Activated naive CD4-positive, alpha-beta T cell treated with anti-CD3 and anti-CD28 coated beads for 36 hours (primary cell): ENCODE measurements at regions of chr19 and their contacts with region 1.

Region 1: GRCh38 chr19:54448774-54449700 is at the start of gene LENG8:
- DNase-seq: peak; percentile 98
- H3K4me3 Mint-ChIP-seq: peak within 1 kb of the TSS; percentile 100
- H3K27ac Mint-ChIP-seq: peak within 1 kb of the TSS; percentile 99
- H3K4me1 Mint-ChIP-seq: peaks cover 45% of the 10 kb centered on the region
- H3K27me3 Mint-ChIP-seq: no peaks in the 10 kb centered on the region
- total RNA-seq, gene LENG8: 171 to 175 TPM

Region 2: GRCh38 chr19:54115109-54116063 is 333.7 kb before region 1 on chr19 and contains the starts of genes PRPF31 and TFPT:
- CTCF ChIA-PET with region 1: no interaction called
- intact Hi-C with region 1: loop called (anchors 2 kb)
- DNase-seq: peak; percentile 99
- H3K4me3 Mint-ChIP-seq: peak within 1 kb of the TSS; percentile 90
- H3K27ac Mint-ChIP-seq: peak within 1 kb of the TSS; percentile 97
- H3K4me1 Mint-ChIP-seq: peaks cover 30% of the 10 kb centered on the region
- H3K27me3 Mint-ChIP-seq: no peaks in the 10 kb centered on the region
- total RNA-seq, gene PRPF31: 67.5 to 71.8 TPM
- total RNA-seq, gene TFPT: 17.0 to 17.3 TPM

Region 3: GRCh38 chr19:54137086-54137921 is 311.7 kb before region 1 on chr19 and contains the start of gene CNOT3:
- CTCF ChIA-PET with region 1: no interaction called
- intact Hi-C with region 1: loop called (anchors 1 kb)
- DNase-seq: peak; percentile 100
- H3K4me3 Mint-ChIP-seq: peak within 1 kb of the TSS; percentile 83
- H3K27ac Mint-ChIP-seq: peak within 1 kb of the TSS; percentile 89
- H3K4me1 Mint-ChIP-seq: peaks cover 39% of the 10 kb centered on the region
- H3K27me3 Mint-ChIP-seq: no peaks in the 10 kb centered on the region
- total RNA-seq, gene CNOT3: 50.4 to 58.3 TPM

Region 4: DNA sequence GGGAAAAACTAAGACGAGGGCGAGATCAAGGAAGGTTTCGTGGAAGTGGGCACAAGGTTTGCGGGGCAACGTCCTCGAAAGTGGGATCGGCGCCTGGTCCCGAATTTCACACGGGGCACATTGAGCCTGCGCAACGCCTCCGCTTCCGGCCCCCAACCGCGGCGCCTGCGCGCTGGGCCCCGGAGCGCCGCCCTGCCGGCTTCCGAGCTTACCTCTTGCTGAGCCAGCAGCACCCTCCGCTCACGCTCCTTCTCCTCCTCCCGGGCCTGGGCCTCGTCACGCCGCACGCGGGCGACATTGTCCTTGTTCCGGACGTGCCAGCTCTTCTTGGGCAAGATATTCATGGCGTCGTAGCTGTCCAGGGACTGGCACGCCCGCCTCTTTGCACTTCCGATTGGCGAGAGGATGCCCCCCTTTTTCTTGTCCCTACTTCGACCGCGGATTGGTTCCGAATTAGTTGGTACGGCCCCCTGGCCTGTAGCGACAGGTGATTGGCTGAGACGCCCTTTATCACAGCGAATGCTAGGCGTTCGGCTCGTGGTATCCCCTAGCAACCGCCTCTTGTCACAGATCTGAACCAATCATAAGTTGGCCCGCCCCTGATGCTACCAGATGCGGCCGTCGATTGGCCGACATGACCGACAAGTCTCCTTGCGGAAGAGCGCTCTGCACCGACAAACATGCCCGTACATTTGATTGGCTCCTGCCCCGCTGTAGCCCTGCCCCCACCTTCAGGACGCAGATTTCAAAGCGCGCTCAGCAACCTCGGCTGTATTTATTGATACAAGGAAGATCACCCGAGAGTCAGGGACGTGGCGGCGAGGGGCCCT is 289.5 kb before region 1 on chr19 and contains the start of gene LENG1:
- CTCF ChIA-PET with region 1: no interaction called
- intact Hi-C with region 1: loop called (anchors 10 kb)
- DNase-seq: peak; percentile 100
- H3K4me3 Mint-ChIP-seq: peak within 1 kb of the TSS; percentile 100
- H3K27ac Mint-ChIP-seq: peak within 1 kb of the TSS; percentile 99
- H3K4me1 Mint-ChIP-seq: peaks cover 58% of the 10 kb centered on the region
- H3K27me3 Mint-ChIP-seq: peaks cover 7% of the 10 kb centered on the region
- total RNA-seq, gene LENG1: 4.7 to 5.6 TPM

Region 5: DNA sequence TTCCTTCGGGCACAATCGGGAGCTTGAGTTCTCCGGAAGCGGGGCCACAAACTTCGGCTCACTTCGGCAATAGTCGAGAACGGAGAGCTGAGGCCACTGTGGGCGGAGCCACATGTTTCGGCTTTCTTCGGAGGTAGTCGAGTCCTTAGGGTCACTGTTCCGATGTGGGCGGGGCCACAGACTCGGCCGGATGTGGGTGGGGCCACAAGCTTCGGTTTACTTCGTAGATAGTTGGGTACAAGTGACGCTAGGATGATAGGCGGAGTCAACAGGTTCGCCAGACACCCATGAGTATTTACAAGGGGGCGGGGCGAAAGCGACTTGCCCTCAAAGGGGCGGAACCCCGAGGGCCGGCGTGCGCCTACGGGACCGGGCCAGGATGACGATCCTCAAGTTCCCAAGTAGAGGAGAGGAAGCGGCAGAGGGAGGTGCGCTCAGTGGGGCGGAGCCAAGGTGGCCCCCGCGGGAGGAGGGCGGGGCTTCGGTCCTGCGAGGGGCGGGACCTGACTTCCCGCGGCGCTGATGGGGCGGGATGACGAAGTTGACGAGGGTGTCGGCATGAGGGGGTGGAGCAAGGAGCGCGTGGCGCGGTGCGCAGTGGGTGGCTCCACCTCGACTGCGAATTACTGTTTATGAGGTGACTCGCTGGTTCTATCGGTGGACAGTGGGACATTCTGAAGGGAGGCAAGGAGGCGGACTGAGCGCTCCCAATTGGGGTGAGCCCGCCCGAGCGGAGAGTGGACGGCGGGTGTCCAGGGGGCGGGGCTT is 259.1 kb before region 1 on chr19:
- CTCF ChIA-PET with region 1: no interaction called
- intact Hi-C with region 1: loop called (anchors 2 kb)
- DNase-seq: peak; percentile 100
- H3K4me3 Mint-ChIP-seq: peak overlapping the region; percentile 82
- H3K27ac Mint-ChIP-seq: peak overlapping the region; percentile 96
- H3K4me1 Mint-ChIP-seq: peaks cover 31% of the 10 kb centered on the region
- H3K27me3 Mint-ChIP-seq: no peaks in the 10 kb centered on the region

Region 6: DNA sequence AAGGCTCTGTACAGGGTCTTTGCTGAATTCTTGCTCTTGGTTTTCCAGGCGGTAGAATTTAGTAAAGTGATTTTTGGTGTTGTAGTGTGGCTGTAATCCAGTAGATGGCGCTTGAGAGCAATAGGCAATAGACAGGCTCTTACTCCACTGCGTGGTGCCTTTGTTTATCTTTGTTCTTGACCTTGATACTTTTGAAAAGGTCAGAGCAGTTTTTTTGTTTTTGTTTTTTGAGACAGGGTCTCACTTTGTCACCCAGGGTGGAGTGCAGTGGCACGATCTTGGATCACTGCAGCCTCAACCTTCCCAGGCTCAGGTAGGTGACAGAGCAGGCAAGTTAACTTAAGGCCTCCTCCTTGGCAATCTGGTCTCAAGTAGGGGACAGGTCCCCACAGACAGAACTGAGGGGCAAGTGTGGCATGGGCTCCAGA is 123.8 kb before region 1 on chr19:
- CTCF ChIA-PET with region 1: no interaction called
- intact Hi-C with region 1: loop called (anchors 5 kb)
- DNase-seq: peak; percentile 71
- H3K4me3 Mint-ChIP-seq: no peak overlapping the region
- H3K27ac Mint-ChIP-seq: no peak overlapping the region
- H3K4me1 Mint-ChIP-seq: peaks cover 29% of the 10 kb centered on the region
- H3K27me3 Mint-ChIP-seq: peaks cover 4% of the 10 kb centered on the region

Region 7: DNA sequence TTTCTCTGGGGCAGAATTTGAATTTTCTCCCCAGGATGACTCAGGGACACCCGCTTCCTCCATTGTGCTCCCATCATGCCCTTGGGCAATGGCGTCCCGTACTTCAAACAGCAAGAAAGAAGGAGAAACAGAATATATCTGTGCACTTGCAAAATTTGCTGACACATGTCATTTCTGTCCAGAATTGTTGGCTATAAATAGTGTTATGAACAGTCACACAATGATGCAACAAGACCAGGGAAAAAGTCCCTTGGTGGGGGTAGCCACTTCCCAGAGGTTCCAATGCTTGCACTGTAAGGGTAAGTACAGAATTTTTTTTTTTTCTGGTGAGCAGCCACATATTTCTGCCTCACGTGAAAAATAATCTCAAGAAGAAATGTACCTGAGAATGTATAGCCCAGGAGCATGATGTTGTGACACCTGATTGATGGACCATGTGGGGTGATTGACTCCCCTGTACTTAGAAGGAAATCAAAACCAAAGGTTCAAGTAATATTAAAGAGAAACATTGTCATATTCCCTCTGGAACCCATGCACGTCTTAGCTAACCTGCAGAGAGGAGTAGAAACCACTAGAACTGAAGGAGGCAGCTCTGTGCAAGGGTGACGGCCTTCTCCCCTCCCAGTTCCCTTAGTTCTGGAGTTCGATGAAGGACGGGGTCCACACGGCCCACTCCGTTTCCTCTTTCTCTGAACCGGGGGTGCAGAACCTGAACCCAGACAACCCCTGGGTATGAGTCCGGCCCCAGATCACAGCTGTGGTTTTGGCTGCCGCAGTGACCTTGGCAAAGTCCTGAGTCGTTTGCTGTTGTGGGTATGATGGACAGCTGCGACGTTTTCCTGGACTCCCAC is 75.0 kb before region 1 on chr19:
- CTCF ChIA-PET with region 1: no interaction called
- intact Hi-C with region 1: no loop called
- DNase-seq: no peak
- H3K4me3 Mint-ChIP-seq: no peak overlapping the region
- H3K27ac Mint-ChIP-seq: no peak overlapping the region
- H3K4me1 Mint-ChIP-seq: peaks cover 75% of the 10 kb centered on the region
- H3K27me3 Mint-ChIP-seq: peaks cover 33% of the 10 kb centered on the region

Region 8: DNA sequence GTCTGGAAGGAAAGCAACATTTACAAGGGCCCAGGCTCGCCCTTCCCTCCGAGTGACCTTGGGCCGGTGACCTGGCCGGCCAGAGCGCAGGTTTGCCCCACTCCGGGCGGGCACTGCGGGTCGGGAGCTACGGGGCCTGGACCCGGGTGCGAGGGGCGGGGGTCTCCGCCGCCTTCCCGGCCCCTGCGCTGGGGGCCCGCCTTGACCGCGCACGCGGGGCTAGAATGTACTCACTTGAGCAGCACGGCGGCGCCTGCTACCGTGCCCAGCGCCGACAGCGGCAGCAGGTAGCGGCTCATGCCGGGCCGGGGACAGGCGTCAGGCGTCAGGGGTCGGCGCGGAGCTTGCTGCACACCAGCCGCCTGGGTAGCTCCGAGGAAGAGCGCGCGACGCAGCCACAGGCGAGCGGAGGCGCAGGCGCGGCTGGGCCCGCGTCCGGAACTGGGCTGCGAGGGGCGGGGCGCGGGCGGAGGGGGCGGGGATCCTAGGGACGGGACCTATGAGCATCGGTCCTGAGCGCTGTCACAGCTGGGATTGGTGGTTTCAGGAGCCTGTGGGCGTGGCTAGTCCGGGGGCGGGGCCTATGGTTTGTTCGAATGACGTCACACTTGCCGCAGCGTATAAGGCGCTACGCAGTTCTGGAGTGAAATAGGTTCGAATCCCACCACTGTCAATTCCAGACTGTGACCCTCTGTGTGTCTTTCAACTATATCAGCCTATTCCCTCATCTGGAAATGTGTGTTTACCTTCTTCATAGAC is 613.9 kb after region 1 on chr19 and contains the start of gene RDH13:
- CTCF ChIA-PET with region 1: no interaction called
- intact Hi-C with region 1: loop called (anchors 2 kb)
- DNase-seq: peak; percentile 99
- H3K4me3 Mint-ChIP-seq: peak within 1 kb of the TSS; percentile 84
- H3K27ac Mint-ChIP-seq: no peak within 1 kb of the TSS
- H3K4me1 Mint-ChIP-seq: peaks cover 18% of the 10 kb centered on the region
- H3K27me3 Mint-ChIP-seq: peaks cover 24% of the 10 kb centered on the region
- total RNA-seq, gene RDH13: 8.7 to 8.9 TPM